ENCODE measurements at regions of chr9 and their contacts with region 1.

Region 1: GRCh38 chr9:83334320-83334719 is 203.9 kb downstream of the FRMD3 start:
- DNase-seq: peak; percentile 84 to 91
- ATAC-seq: peak; percentile 93 to 98 (median 97)
- H3K4me3 ChIP-seq: no peak overlapping the region
- H3K27ac ChIP-seq: no peak overlapping the region
- H3K4me1 ChIP-seq: no peaks in the 10 kb centered on the region
- H3K27me3 ChIP-seq: no peaks in the 10 kb centered on the region
- CTCF ChIP-seq: peak; percentile 94

Region 2: DNA sequence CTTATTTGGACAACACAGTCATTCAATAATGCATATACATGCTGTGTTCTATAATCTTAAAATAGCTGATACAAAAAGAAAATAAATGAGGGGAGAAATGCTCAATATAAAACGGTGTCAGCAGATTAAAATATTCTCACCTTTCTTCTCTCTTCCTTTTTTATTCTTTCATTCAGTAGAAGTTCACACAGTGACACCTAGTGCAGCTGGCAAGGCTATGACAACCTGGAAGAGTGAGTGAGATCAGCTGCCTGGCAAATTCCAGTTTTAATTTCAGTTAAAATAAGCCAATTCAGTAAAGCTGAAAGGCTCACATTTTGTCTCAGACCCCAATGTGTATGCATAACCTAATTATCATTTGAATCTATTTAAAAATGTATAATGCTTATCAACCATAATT is 421.7 kb before region 1 on chr9:
- intact Hi-C with region 1: no loop called
- DNase-seq: no peak
- ATAC-seq: no peak
- H3K4me3 ChIP-seq: no peak overlapping the region
- H3K27ac ChIP-seq: no peak overlapping the region
- H3K4me1 ChIP-seq: no peaks in the 10 kb centered on the region
- H3K27me3 ChIP-seq: peaks cover 0 to 3% (median 0%) of the 10 kb centered on the region in 3 donors
- CTCF ChIP-seq: no peak

Region 3: DNA sequence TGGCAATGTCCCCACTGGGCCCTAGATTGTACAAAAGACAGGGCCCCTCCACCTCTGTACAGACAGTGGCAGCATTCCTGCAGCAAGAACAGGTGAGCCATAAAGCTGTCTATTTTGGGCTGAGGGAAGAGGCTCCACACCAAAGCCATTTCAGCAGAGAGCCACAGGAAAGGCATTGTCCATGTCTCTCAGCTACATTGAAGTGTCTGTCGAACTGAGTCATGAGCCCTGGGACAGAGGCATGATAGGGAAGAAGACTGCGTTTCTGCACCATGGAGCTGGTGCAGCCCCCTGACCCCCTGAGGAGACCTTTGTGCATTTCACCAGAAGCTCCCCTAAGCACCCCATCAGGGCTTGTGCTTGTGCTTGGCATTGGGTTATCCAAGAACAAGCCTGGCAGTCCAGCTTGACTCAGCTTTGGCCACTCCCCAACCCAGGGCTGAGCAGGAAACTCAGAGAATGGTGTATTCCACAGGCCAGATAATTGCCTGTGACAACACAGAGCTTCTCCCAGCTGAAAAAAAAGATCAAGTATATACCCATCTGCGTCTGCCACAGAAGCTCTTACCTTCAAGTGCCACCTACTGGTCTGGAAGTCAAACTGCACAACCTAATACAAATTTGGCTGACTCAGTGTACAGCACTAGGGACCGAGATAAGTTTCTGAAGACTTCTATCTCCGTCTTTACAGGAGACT is 209.8 kb after region 1 on chr9:
- intact Hi-C with region 1: loop called (anchors 2 to 5 kb)
- DNase-seq: peak; percentile 19 to 58
- ATAC-seq: peak; percentile 69 to 93 (median 82)
- H3K4me3 ChIP-seq: no peak overlapping the region
- H3K27ac ChIP-seq: no peak overlapping the region
- H3K4me1 ChIP-seq: peaks cover 1% of the 10 kb centered on the region
- H3K27me3 ChIP-seq: no peaks in the 10 kb centered on the region
- CTCF ChIP-seq: peak; percentile 65

Region 4: DNA sequence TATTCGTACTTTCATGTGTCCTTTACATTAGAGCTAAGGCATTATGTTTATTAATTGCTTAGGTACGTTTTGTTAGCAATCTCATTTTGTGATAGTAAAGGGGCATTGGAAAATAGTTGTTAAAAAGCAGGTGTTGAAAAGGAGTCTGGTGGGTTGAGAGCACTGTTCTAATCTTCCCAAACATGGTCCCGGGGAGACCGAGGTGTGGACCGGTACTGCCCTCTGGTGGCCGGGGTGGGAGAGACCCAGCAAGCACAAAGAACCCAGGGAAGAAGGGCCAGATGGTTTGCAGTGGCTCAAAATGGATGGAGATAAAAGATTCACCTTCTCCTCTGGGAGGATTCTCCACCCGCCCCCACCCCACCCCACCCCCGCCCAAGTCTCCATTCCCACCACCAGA is 314.8 kb after region 1 on chr9:
- intact Hi-C with region 1: loop called in 1 of 2 experiments (anchors 10 kb)
- DNase-seq: peak; percentile 64 to 86
- ATAC-seq: peak; percentile 78 to 86 (median 80)
- H3K4me3 ChIP-seq: no peak overlapping the region
- H3K27ac ChIP-seq: no peak overlapping the region
- H3K4me1 ChIP-seq: no peaks in the 10 kb centered on the region
- H3K27me3 ChIP-seq: no peaks in the 10 kb centered on the region
- CTCF ChIP-seq: peak; percentile 67